ENCODE measurements at regions of chr3 and their contacts with region 1.

Region 1: GRCh38 chr3:12484198-12484974 is at the start of gene TSEN2:
- DNase-seq: peak; percentile 98
- total RNA-seq, gene TSEN2: 13.8 TPM

Region 2: DNA sequence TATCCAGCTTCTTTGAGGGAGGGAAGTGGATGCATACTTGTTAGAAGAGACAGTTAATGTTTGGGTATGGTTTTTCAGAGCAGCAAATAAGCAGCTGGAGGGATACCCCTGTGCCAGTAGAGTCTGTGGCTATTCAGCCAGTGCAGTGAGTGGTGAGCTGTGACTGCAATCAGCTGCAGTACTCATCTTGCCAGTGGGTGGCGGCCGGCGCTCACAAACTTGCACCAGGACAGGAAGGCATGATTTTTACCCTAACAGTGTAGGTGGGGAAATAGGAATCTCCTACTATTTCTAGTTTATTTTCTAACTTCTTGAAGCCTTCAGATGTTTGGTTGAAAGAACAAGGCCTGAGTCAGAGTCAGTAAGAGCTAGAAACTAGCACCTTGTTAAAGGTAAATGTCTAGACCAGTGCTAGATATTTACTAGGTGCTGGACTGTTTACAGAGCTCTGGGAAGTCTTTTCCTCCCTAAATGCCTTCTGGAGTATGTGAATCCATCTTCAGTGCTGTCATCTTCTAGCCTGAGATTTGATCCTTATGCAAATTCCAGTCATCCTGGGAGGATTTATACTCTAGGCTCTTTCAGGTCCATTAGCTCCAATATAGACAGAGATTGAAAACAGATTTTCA is 349.2 kb before region 1 on chr3:
- intact Hi-C with region 1: loop called (anchors 5 kb)
- DNase-seq: peak; percentile 92

Region 3: DNA sequence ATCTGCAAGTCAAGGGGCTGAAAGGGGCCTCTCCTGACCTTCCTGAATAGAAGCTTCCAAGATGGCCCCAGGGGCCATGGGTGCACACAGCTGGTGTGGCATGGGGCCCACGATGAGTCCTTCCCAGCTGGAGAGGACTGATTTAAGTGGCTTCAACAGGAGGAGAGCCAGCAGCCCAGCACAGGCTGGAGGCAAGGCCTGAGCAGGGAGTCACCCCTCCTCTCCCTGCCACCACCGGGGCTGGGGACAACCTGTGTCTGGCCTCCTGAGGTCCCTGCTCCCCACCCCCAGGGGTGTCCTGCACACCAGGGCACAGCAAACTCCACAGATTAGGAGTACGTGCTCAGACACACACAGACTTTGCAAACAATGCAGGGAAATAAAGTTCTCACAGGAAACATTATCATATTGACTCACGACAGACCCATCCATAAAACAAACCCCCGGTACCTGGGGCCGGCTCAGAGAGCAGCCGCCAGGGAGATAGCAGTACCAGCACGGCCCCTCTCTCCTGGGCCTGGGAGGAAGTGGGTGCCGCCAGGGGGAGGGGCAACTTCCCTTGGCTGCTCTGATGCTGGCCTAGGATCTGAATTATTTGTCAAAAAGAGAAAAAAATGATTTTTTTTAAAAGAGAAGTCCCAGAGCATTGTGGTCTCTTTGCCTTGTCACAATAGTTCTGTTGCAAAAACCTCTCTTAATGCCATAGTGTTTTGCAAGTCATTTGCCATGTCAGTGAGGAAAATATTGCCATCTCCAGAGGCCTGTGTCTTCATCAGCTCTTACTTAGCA is 22.0 kb before region 1 on chr3:
- intact Hi-C with region 1: no loop called
- DNase-seq: no peak

Measured in posterior vena cava (tissue), 2 donors.